Right cardiac atrium (tissue), 5 donors: ENCODE measurements at regions of chr2 and their contacts with region 1.

Region 1: GRCh38 chr2:172698041-172698863 is 37.4 kb upstream of the RAPGEF4 start:
- DNase-seq: no peak
- ATAC-seq: no peak
- H3K4me3 ChIP-seq: no peak overlapping the region
- H3K27ac ChIP-seq: no peak overlapping the region
- H3K4me1 ChIP-seq: no peaks in the 10 kb centered on the region
- H3K27me3 ChIP-seq: no peaks in the 10 kb centered on the region

Region 2: GRCh38 chr2:172613040-172613439 is 85.2 kb before region 1 on chr2:
- intact Hi-C with region 1: loop called in 1 of 4 experiments (anchors 10 kb)
- DNase-seq: peak in 1 of 3 donors; percentile 47
- ATAC-seq: no peak
- H3K4me3 ChIP-seq: no peak overlapping the region
- H3K27ac ChIP-seq: no peak overlapping the region
- H3K4me1 ChIP-seq: no peaks in the 10 kb centered on the region
- H3K27me3 ChIP-seq: no peaks in the 10 kb centered on the region